ENCODE measurements at regions of chr3 and their contacts with region 1.

Region 1: DNA sequence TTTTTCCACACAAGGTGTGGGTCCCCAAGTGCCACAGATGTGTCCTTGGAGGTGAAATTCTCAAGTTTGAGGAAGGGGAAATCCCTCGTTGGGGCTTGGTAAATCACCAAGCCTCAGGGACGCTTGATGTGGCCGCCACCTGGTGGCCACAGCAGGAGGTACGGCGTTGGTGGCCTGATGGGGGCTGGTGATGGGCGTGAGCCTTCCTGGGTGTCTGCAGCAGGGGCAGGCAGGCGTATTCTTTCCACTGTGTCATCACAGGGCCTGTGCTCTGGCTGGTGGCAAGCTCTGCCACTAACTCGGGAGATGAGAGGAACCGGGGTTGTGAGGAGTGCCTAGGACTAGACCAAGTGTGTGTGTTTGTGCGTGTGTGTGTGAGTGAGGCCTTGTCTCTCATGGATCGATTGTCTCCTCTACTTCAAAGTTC is 4.2 kb downstream of the ACOX2 start:
- DNase-seq: peak; percentile 55
- H3K4me3 ChIP-seq: no peak overlapping the region
- H3K27ac ChIP-seq: no peak overlapping the region
- H3K4me1 ChIP-seq: peaks cover 21% of the 10 kb centered on the region
- H3K27me3 ChIP-seq: no peaks in the 10 kb centered on the region
- CTCF ChIP-seq: peak; percentile 90 to 91
- POLR2A ChIP-seq: no peak

Region 2: GRCh38 chr3:57852896-57853295 is 679.9 kb before region 1 on chr3:
- CTCF ChIA-PET with region 1: no interaction called
- POLR2A ChIA-PET with region 1: no interaction called
- dilution Hi-C with region 1: no loop called
- intact Hi-C with region 1: no loop called
- DNase-seq: peak; percentile 54
- H3K4me3 ChIP-seq: no peak overlapping the region
- H3K27ac ChIP-seq: no peak overlapping the region
- H3K4me1 ChIP-seq: no peaks in the 10 kb centered on the region
- H3K27me3 ChIP-seq: no peaks in the 10 kb centered on the region
- CTCF ChIP-seq: peak in 1 of 2 donors; percentile 6
- POLR2A ChIP-seq: no peak

Region 3: DNA sequence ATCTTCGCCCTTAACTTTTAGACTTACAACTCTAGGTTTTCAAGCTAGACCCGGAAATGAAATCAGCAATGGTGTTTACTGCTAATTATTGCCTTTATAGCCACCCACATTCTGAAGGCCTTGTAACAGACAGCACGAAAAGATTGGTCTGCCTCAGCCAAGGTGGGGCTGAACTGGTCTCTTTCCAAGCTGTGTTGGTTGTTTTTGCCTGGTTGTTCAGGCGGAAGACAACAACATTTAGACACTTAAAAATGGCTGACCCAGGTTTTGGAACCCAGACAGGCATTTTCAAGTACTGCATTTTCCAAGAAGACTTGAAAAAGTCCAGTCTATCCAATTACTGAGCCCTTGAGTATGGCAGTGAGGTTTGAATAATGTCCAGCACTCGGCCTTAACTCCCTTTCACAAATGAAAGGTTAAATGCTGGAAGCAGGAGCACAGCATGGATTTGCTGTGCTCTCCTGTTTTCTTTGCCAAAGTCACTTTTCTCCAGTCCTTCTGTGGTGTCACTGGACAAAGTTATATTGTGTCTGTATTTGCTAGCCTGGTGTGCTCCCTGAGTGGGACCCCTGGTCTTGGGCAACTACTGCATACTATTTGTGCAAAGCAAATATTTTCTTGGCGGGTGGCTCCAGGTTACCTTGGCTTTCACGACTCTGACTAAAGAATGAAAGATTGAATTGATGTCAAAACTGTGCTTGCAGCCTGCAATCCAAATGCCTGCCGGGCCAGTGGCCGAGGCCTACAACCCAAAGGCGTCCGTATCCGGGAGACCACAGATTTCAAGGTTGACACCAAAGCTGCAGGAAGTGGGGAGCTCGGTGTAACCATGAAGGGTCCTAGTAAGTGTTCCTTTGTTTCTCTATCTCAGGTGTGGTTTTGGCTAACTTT is 431.1 kb before region 1 on chr3:
- CTCF ChIA-PET with region 1: no interaction called
- POLR2A ChIA-PET with region 1: no interaction called
- dilution Hi-C with region 1: no loop called
- intact Hi-C with region 1: no loop called
- DNase-seq: no peak
- H3K4me3 ChIP-seq: no peak overlapping the region
- H3K27ac ChIP-seq: no peak overlapping the region
- H3K4me1 ChIP-seq: peaks cover 4% of the 10 kb centered on the region
- H3K27me3 ChIP-seq: no peaks in the 10 kb centered on the region
- CTCF ChIP-seq: no peak
- POLR2A ChIP-seq: no peak

Region 4: DNA sequence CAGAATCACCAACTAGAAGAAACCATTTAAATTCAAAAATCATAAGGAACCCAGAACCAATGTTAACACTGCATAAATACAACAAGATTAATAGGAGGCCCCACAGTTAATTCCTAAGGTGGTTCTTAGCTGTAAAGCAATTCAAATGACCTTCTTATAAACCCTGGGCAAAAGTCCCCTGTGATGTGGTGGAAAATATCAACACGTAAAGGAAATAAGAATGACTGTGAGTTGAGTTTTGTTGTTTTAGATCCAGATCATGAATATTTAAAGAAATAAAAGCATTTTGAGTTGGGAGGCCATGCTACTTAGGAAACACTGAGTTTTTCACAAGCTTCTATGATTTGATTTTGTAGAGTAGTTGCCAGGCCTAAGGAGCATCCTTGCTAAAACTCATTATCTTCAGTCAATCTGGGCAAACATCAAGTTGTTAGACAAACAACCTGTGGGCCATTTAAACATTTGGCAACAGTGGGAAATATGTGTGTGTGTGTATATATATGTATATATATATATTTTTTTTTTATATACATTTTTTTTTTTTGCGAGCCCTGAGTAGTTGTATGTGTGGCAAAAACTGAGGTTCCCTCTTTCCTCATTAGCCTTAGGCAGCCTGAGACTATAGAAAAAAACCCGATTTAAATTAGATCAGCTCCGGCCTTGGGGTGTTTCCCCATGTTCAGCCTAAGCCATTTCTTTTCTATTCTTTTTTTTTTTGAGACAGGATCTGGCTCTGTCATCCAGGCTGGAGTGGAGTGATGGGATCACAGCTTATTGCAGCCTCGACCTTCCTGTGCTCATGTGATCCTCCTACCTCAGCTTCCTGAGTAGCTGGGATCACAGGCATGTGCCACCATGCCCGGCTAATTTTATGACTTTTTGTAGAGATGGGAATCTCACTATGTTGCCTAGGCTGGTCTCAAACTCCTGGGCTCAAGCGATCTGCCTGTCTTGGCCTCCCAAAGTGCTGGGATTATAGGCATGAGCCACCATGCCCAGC is 208.1 kb before region 1 on chr3:
- CTCF ChIA-PET with region 1: interaction called, 6 read pairs
- POLR2A ChIA-PET with region 1: no interaction called
- dilution Hi-C with region 1: no loop called
- intact Hi-C with region 1: loop called (anchors 1 kb)
- DNase-seq: peak; percentile 89
- H3K4me3 ChIP-seq: no peak overlapping the region
- H3K27ac ChIP-seq: peak overlapping the region; percentile 14
- H3K4me1 ChIP-seq: peaks cover 19% of the 10 kb centered on the region
- H3K27me3 ChIP-seq: no peaks in the 10 kb centered on the region
- CTCF ChIP-seq: no peak
- POLR2A ChIP-seq: no peak

Region 5: DNA sequence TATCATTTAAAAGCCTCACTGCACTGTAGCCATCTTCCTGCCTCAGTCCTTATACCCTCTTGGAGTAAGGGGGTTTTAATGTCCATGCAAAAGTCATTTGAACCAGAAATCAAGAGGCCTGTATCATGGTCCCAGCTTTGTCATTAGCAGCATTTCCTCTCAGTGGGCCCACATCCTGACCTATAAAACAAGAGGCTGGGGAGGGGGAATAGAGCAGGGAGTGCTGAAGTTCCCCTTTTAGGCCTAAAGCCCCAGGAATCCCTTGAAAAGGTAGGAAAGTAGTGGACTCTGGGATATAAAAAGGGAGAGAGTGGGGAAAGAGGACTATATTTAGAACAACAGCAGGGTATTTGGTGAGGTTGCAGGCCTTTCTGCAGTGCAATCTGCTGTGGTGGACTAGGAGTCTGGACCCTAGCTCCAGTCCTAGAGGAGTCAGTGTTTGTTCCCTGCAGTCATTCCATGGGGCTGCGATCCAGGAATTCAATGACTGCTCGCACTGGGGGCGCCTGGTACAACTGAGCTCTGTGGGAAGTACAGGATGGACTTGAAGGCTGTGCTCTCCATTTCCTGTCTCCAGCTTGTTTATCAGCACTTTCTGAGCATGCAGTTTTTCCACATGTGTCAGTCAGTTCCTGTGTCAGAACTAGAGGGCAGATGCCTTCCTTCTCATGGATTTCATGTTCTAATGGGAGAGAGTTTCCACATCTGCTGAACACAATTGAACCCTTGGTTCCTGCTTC is 146.0 kb before region 1 on chr3:
- CTCF ChIA-PET with region 1: no interaction called
- POLR2A ChIA-PET with region 1: no interaction called
- dilution Hi-C with region 1: no loop called
- intact Hi-C with region 1: loop called (anchors 1 kb)
- DNase-seq: peak; percentile 95
- H3K4me3 ChIP-seq: no peak overlapping the region
- H3K27ac ChIP-seq: peak overlapping the region; percentile 71
- H3K4me1 ChIP-seq: peaks cover 40% of the 10 kb centered on the region
- H3K27me3 ChIP-seq: no peaks in the 10 kb centered on the region
- CTCF ChIP-seq: peak in 1 of 2 donors; percentile 1
- POLR2A ChIP-seq: peak; percentile 57

Region 6: DNA sequence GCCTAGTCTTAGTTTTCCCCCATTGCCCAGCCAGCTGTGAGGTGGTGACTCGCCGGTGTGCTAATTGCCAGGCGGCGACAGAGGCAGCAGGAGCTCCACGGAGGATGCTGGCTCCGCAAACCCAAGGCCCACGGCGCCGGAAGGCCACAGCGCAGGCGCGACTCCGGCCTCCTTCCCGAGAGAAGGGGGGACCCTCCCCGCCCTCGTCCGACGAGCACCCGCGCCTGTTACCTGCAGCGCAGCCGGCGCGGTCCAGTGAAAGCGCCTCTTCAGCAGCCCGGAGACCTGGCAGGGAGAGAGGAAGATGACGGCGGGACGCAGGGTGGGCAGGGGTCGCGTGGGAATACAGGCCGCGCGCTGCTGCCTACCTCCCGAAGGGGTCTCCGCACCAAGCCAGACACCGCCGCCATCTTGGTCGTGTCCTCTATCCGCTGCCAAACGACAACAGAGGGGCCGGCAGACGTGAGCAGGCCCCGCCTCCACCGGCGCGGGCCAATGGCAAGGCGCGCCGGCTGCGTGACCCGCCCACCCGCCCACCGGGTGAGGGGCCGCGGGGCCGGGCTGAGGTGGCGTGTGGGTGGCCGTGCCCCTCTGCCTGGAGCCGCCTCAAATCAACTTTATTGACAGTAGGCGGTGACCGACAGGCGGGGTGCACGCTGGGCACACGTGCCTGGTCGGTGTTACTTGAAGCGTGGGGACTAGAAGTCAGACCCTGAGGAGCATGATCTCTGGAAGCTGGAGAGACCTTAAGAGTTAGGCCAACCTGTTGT is 99.2 kb before region 1 on chr3 and contains the start of gene PDHB:
- CTCF ChIA-PET with region 1: interaction called, 3 read pairs
- POLR2A ChIA-PET with region 1: interaction called, 3 read pairs
- dilution Hi-C with region 1: no loop called
- intact Hi-C with region 1: loop called (anchors 2 kb)
- DNase-seq: peak; percentile 94
- H3K4me3 ChIP-seq: peak within 1 kb of the TSS; percentile 51 to 92 (median 85)
- H3K27ac ChIP-seq: peak within 1 kb of the TSS; percentile 69
- H3K4me1 ChIP-seq: peaks cover 5% of the 10 kb centered on the region
- H3K27me3 ChIP-seq: peaks cover 3 to 5% of the 10 kb centered on the region in 2 experiments
- CTCF ChIP-seq: no peak
- POLR2A ChIP-seq: peak; percentile 91
- total RNA-seq, gene PDHB: 59.3 and 60.8 TPM in 2 replicates

Region 7: GRCh38 chr3:58463181-58463941 is 69.4 kb before region 1 on chr3:
- CTCF ChIA-PET with region 1: interaction called, 12 read pairs
- POLR2A ChIA-PET with region 1: no interaction called
- dilution Hi-C with region 1: no loop called
- intact Hi-C with region 1: loop called (anchors 1 kb)
- DNase-seq: peak; percentile 64
- H3K4me3 ChIP-seq: peak overlapping the region in 1 of 3 experiments; percentile 16
- H3K27ac ChIP-seq: no peak overlapping the region
- H3K4me1 ChIP-seq: peaks cover 5% of the 10 kb centered on the region
- H3K27me3 ChIP-seq: no peaks in the 10 kb centered on the region
- CTCF ChIP-seq: peak; percentile 84 to 87
- POLR2A ChIP-seq: no peak

Region 8: DNA sequence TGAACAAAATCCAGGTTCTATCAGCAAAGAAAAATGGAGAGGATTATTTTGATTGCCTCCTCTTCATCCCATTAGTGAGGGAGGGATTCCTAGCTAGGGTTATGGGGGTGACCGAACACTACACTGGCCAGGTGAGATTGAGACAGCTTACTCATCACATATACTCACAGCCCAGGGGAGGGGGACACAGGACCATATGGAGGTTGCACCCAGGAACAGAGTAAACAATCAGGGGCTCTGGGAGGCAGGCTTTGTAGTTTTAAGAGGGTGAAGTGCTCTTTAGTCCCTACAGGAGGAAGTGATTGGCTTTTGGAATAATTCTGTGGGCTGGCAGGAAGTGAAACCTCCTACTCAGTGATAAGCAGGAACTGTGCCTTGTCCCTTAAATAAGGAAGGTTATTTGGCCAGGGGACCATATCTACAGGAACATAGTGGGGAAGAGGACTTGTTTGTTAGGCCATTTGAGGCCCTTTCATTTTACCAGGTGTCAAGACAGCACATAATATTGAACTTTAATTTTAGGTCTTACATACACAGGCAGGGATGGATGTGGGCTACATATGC is 58.4 kb before region 1 on chr3:
- CTCF ChIA-PET with region 1: no interaction called
- POLR2A ChIA-PET with region 1: no interaction called
- dilution Hi-C with region 1: no loop called
- intact Hi-C with region 1: no loop called
- DNase-seq: no peak
- H3K4me3 ChIP-seq: no peak overlapping the region
- H3K27ac ChIP-seq: no peak overlapping the region
- H3K4me1 ChIP-seq: peaks cover 3% of the 10 kb centered on the region
- H3K27me3 ChIP-seq: peaks cover 0 to 4% of the 10 kb centered on the region in 2 experiments
- CTCF ChIP-seq: no peak
- POLR2A ChIP-seq: no peak

Region 9: GRCh38 chr3:58491506-58492402 is 41.1 kb before region 1 on chr3 and contains the start of gene KCTD6:
- CTCF ChIA-PET with region 1: interaction called, 16 read pairs
- POLR2A ChIA-PET with region 1: no interaction called
- dilution Hi-C with region 1: no loop called
- intact Hi-C with region 1: loop called (anchors 1 kb)
- DNase-seq: peak; percentile 97
- H3K4me3 ChIP-seq: peak within 1 kb of the TSS; percentile 67 to 90 (median 86)
- H3K27ac ChIP-seq: peak within 1 kb of the TSS; percentile 21
- H3K4me1 ChIP-seq: peaks cover 16% of the 10 kb centered on the region
- H3K27me3 ChIP-seq: peaks cover 2 to 5% of the 10 kb centered on the region in 2 experiments
- CTCF ChIP-seq: peak; percentile 79 to 80
- POLR2A ChIP-seq: no peak
- total RNA-seq, gene KCTD6: 6.4 and 7.4 TPM in 2 replicates

Region 10: DNA sequence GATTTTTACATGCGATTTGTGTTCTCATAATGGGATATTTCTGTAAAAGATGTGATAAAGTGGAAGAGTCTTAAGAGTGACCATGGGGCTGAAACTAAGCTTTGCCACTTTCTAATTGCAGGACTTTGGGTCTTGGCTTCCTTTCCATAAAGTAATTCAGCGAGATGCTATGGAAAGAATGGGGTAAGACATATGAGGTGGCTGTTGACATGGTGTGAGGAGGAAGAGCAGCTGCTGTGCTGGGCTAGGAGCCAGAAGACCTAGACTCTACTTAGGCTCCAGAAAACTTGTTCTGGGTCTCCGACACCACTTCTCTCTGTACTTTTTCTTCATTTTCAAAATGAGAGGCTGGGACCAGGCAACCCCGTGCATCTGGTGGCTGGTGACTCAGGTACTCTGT is 1171.5 kb after region 1 on chr3:
- CTCF ChIA-PET with region 1: no interaction called
- POLR2A ChIA-PET with region 1: no interaction called
- dilution Hi-C with region 1: no loop called
- intact Hi-C with region 1: no loop called
- DNase-seq: no peak
- H3K4me3 ChIP-seq: no peak overlapping the region
- H3K27ac ChIP-seq: no peak overlapping the region
- H3K4me1 ChIP-seq: no peaks in the 10 kb centered on the region
- H3K27me3 ChIP-seq: no peaks in the 10 kb centered on the region
- CTCF ChIP-seq: no peak
- POLR2A ChIP-seq: no peak